ENCODE measurements at regions of chr19 and their contacts with region 1.

Region 1: DNA sequence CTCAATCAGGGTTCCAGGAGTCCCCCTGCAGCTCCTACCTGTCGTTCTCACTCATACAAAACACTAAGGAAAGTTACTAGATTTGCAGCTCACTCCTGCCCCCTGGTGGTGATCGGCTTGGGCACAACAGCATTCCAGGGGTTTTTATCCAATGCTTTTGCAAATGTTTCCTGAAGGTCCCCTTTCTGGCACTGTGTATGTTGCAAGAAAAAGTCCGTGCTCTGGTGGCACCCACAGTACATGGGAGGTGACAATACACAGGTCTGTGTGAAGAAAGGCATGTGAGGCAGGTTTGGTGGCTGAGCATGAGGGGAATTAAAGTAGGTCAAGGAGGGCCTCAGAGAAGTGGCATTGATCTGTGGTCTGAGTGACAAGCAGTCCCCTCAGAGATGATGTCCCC is 8.6 kb upstream of the TYK2 start:
- DNase-seq: peak; percentile 87 to 98
- H3K4me3 ChIP-seq: no peak overlapping the region
- CTCF ChIP-seq: peak in 2 of 3 donors; percentile 55 to 85
- POLR2A ChIP-seq: no peak

Region 2: GRCh38 chr19:10269333-10270179 is 119.4 kb before region 1 on chr19:
- intact Hi-C with region 1: loop called (anchors 2 kb)
- DNase-seq: peak; percentile 89 to 98
- H3K4me3 ChIP-seq: peak overlapping the region; percentile 35
- CTCF ChIP-seq: peak in 1 of 3 donors; percentile 67
- POLR2A ChIP-seq: no peak

Region 3: DNA sequence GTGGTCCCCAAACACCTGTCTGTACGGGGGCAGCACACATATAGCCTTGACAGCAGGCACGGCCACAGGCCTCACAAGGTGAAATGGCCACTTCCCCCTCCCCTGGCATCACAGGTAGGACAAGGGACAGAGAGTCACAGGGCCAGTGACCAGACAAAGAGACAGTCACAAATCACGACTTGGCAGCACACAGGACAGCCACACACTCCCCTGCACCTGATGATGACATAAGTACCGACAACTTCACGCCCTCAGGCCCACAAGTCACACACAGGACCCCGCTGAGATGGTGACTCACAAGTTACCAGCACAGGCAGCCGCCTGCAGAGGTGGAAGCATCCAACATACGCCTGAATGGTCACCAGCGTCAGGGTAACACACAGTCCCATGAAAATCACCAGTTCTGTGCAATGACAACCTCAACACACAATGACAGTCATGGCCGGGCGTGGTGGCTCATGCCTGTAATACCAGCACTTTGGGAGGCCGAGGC is 25.1 kb before region 1 on chr19:
- intact Hi-C with region 1: loop called (anchors 2 kb)
- DNase-seq: no peak
- H3K4me3 ChIP-seq: no peak overlapping the region
- CTCF ChIP-seq: no peak
- POLR2A ChIP-seq: no peak

Measured in lower leg skin (tissue), 4 donors.